ENCODE measurements at regions of chr19 and their contacts with region 1.

Region 1: GRCh38 chr19:13060964-13061927 is 41.4 kb downstream of the LYL1 start:
- DNase-seq: peak; percentile 63 to 78 (median 78)
- H3K4me3 ChIP-seq: peak overlapping the region; percentile 34 to 86 (median 64)
- H3K27ac ChIP-seq: no peak overlapping the region
- H3K4me1 ChIP-seq: peaks cover 0 to 72% (median 34%) of the 10 kb centered on the region in 4 experiments
- H3K27me3 ChIP-seq: no peaks in the 10 kb centered on the region

Region 2: GRCh38 chr19:12974301-12975220 is 86.7 kb before region 1 on chr19:
- CTCF ChIA-PET with region 1: interaction called, 43 read pairs
- POLR2A ChIA-PET with region 1: interaction called, 5 read pairs
- DNase-seq: no peak
- H3K4me3 ChIP-seq: no peak overlapping the region
- H3K27ac ChIP-seq: no peak overlapping the region
- H3K4me1 ChIP-seq: peaks cover 0 to 14% (median 10%) of the 10 kb centered on the region in 4 experiments
- H3K27me3 ChIP-seq: no peaks in the 10 kb centered on the region

Region 3: GRCh38 chr19:13007292-13008045 is 53.8 kb before region 1 on chr19:
- CTCF ChIA-PET with region 1: interaction called, 28 read pairs
- POLR2A ChIA-PET with region 1: interaction called, 3 read pairs
- DNase-seq: peak in 1 of 3 donors; percentile 28
- H3K4me3 ChIP-seq: no peak overlapping the region
- H3K27ac ChIP-seq: no peak overlapping the region
- H3K4me1 ChIP-seq: peaks cover 0 to 29% (median 15%) of the 10 kb centered on the region in 4 experiments
- H3K27me3 ChIP-seq: peaks cover 0 to 48% (median 25%) of the 10 kb centered on the region in 5 experiments

Region 4: GRCh38 chr19:13012690-13013608 is 48.3 kb before region 1 on chr19:
- CTCF ChIA-PET with region 1: interaction called, 19 read pairs
- POLR2A ChIA-PET with region 1: interaction called, 3 read pairs
- DNase-seq: peak in 2 of 3 donors; percentile 59 to 72
- H3K4me3 ChIP-seq: peak overlapping the region; percentile 13 to 74 (median 51)
- H3K27ac ChIP-seq: no peak overlapping the region
- H3K4me1 ChIP-seq: peaks cover 0 to 56% (median 42%) of the 10 kb centered on the region in 4 experiments
- H3K27me3 ChIP-seq: peaks cover 24 to 73% (median 57%) of the 10 kb centered on the region in 5 experiments

Region 5: GRCh38 chr19:13022859-13023636 is 38.2 kb before region 1 on chr19:
- CTCF ChIA-PET with region 1: interaction called, 253 read pairs
- POLR2A ChIA-PET with region 1: no interaction called
- DNase-seq: peak; percentile 73 to 84 (median 73)
- H3K4me3 ChIP-seq: peak overlapping the region in 5 of 7 experiments; percentile 63 to 83 (median 72)
- H3K27ac ChIP-seq: peak overlapping the region; percentile 46 to 83
- H3K4me1 ChIP-seq: peaks cover 0 to 40% (median 18%) of the 10 kb centered on the region in 4 experiments
- H3K27me3 ChIP-seq: peaks cover 2 to 54% (median 7%) of the 10 kb centered on the region in 5 experiments

Region 6: DNA sequence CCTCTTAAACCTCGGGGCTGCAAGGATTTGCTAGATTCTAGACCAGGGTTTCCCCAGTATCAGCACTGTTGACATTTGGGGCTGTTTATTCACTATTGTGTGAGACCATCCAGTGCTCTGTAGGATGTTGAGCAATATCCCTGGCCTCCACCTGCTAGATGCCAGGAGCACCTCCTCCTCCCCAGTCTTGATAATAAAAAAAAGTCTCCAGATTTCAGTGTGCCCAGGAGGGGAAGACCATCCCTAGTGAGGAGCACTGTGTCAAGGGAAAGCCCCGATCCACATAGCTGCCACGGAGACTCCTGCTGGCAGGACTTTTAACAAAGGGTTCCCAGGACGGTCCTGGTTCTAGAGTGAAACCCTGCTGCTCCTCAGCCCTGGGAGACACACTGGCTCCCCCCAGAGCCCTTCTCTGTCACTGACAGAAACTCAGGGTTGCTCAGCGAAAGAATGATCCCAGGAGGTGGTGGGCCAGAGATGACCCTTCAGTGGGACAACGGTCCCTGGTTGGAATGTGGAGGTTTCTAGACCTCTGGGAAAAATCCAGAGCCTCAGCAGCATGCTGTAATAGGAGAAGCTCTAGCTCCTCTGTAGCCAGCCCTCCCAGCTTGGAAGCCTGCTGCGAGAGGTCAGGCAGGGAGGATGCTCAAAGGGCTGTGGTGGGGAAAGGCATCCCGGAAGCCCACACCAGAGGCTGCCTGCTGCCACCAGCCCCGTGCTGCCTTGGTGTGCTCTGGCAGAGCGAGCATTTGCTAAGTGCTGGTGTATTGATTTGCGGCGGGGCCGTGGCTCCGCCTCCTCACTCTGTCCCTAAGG is 21.2 kb after region 1 on chr19:
- CTCF ChIA-PET with region 1: interaction called, 29 read pairs
- POLR2A ChIA-PET with region 1: interaction called, 5 read pairs
- DNase-seq: peak in 2 of 3 donors; percentile 41 to 42
- H3K4me3 ChIP-seq: no peak overlapping the region
- H3K27ac ChIP-seq: no peak overlapping the region
- H3K4me1 ChIP-seq: peaks cover 0 to 62% (median 51%) of the 10 kb centered on the region in 4 experiments
- H3K27me3 ChIP-seq: no peaks in the 10 kb centered on the region